GM12878 (cell line): ENCODE measurements at regions of chr16 and their contacts with region 1.

Region 1: GRCh38 chr16:63361032-63361624 is 1324.9 kb upstream of the CDH8 start:
- DNase-seq: no peak
- ATAC-seq: peak; percentile 73
- H3K4me3 ChIP-seq: no peak overlapping the region
- H3K27ac ChIP-seq: no peak overlapping the region
- H3K4me1 ChIP-seq: no peaks in the 10 kb centered on the region
- H3K27me3 ChIP-seq: no peaks in the 10 kb centered on the region
- CTCF ChIP-seq: peak; percentile 69 to 79 (median 75)
- EP300 ChIP-seq: no peak
- POLR2A ChIP-seq: no peak
- RAD21 ChIP-seq: peak; percentile 75

Region 2: DNA sequence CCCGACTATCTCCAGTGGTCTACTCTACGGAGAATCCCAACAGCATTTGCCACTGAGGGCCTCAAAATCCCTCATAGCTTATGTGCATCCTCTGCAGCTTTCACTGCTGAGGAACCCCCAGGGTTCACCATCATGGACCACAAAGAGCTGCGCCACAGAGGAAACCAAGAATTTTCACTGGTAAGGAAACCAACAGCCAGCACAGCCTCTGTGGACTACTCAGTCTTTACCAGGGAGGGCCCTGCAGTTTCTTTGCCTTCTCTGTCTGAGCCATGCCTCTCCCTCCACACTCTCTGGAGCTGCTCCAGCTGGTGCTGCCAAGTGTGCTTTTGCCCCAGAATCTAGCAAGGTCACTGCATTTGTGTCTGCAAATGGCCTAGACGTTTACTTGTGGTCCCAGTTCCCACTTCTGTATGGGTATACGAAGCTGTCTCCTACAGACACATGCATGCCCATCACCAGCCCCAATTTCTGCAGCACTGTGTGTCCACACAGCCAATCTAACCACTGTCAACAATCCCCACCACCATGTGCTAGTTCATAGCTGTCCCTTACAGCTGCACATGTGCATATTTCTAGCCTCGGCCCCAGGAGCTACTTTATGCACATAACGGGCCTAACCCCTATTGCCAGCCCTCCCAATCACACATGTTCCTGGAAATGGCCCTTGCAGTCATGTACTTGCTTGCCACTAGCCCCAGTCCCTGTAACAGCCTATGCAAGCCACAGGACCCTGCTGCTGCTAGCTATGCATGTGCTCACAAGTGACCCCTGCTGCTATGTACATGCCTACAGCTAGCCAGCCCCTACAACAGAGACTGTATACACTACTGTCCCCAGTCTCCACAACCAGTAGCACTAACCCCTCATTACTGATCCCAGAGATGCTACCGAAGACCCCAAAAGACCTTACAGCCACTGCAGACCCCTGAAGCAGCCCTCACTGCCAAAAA is 323.3 kb after region 1 on chr16:
- CTCF ChIA-PET with region 1: no interaction called
- POLR2A ChIA-PET with region 1: no interaction called
- RAD21 ChIA-PET with region 1: no interaction called
- SMC1A ChIA-PET with region 1: no interaction called
- in situ Hi-C with region 1: no loop called
- intact Hi-C with region 1: loop called (anchors 5 kb)
- DNase-seq: no peak
- ATAC-seq: 0 out of 3 replicates have a peak, but pooled peaks have one; percentile 24
- H3K4me3 ChIP-seq: no peak overlapping the region
- H3K27ac ChIP-seq: no peak overlapping the region
- H3K4me1 ChIP-seq: no peaks in the 10 kb centered on the region
- H3K27me3 ChIP-seq: no peaks in the 10 kb centered on the region
- CTCF ChIP-seq: no peak
- EP300 ChIP-seq: no peak
- POLR2A ChIP-seq: no peak
- RAD21 ChIP-seq: no peak

Region 3: GRCh38 chr16:63789603-63790002 is 428.5 kb after region 1 on chr16:
- CTCF ChIA-PET with region 1: no interaction called
- POLR2A ChIA-PET with region 1: no interaction called
- RAD21 ChIA-PET with region 1: no interaction called
- SMC1A ChIA-PET with region 1: no interaction called
- in situ Hi-C with region 1: no loop called
- intact Hi-C with region 1: loop called (anchors 5 kb)
- DNase-seq: no peak
- ATAC-seq: peak; percentile 34; the same call in 1 of the 3 replicates
- H3K4me3 ChIP-seq: no peak overlapping the region
- H3K27ac ChIP-seq: no peak overlapping the region
- H3K4me1 ChIP-seq: no peaks in the 10 kb centered on the region
- H3K27me3 ChIP-seq: no peaks in the 10 kb centered on the region
- CTCF ChIP-seq: no peak
- EP300 ChIP-seq: no peak
- POLR2A ChIP-seq: no peak
- RAD21 ChIP-seq: no peak

Region 4: DNA sequence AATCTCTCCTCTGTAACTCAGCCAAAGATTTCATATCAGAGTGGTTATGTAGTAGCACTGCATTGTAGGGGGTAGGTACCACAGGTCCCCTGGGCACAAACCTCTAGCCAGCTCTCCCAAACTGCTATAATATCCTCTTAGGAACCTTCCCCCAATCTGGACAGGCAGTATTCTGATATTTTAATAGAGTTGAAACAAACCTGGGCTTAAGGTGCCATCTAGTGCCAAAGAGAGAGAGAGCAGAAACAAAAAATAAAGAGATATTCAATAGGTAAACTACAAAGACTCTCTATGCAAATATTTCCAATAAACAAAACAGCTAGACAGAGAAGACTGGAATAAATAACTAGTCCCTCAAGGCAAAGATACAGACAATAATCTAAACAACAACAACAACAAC is 690.7 kb after region 1 on chr16:
- CTCF ChIA-PET with region 1: no interaction called
- POLR2A ChIA-PET with region 1: no interaction called
- RAD21 ChIA-PET with region 1: interaction called, 3 read pairs
- SMC1A ChIA-PET with region 1: no interaction called
- in situ Hi-C with region 1: no loop called
- intact Hi-C with region 1: loop called (anchors 2 kb)
- DNase-seq: no peak
- ATAC-seq: no peak
- H3K4me3 ChIP-seq: no peak overlapping the region
- H3K27ac ChIP-seq: no peak overlapping the region
- H3K4me1 ChIP-seq: no peaks in the 10 kb centered on the region
- H3K27me3 ChIP-seq: no peaks in the 10 kb centered on the region
- CTCF ChIP-seq: peak in 1 of 3 experiments; percentile 12; a peak in 1 of 6 replicates
- EP300 ChIP-seq: no peak
- POLR2A ChIP-seq: no peak
- RAD21 ChIP-seq: no peak

Region 5: GRCh38 chr16:65117811-65118448 is 1756.8 kb after region 1 on chr16:
- CTCF ChIA-PET with region 1: interaction called, 3 read pairs
- POLR2A ChIA-PET with region 1: no interaction called
- RAD21 ChIA-PET with region 1: no interaction called
- SMC1A ChIA-PET with region 1: no interaction called
- in situ Hi-C with region 1: loop called (anchors 5 kb)
- intact Hi-C with region 1: no loop called
- DNase-seq: peak; percentile 2
- ATAC-seq: peak; percentile 88
- H3K4me3 ChIP-seq: no peak overlapping the region
- H3K27ac ChIP-seq: no peak overlapping the region
- H3K4me1 ChIP-seq: no peaks in the 10 kb centered on the region
- H3K27me3 ChIP-seq: no peaks in the 10 kb centered on the region; a peak in 2 of 4 replicates
- CTCF ChIP-seq: peak; percentile 91 to 94 (median 92)
- EP300 ChIP-seq: no peak
- POLR2A ChIP-seq: no peak
- RAD21 ChIP-seq: peak; percentile 89